BJ (cell line): ENCODE measurements at regions of chr19 and their contacts with region 1.

Region 1: DNA sequence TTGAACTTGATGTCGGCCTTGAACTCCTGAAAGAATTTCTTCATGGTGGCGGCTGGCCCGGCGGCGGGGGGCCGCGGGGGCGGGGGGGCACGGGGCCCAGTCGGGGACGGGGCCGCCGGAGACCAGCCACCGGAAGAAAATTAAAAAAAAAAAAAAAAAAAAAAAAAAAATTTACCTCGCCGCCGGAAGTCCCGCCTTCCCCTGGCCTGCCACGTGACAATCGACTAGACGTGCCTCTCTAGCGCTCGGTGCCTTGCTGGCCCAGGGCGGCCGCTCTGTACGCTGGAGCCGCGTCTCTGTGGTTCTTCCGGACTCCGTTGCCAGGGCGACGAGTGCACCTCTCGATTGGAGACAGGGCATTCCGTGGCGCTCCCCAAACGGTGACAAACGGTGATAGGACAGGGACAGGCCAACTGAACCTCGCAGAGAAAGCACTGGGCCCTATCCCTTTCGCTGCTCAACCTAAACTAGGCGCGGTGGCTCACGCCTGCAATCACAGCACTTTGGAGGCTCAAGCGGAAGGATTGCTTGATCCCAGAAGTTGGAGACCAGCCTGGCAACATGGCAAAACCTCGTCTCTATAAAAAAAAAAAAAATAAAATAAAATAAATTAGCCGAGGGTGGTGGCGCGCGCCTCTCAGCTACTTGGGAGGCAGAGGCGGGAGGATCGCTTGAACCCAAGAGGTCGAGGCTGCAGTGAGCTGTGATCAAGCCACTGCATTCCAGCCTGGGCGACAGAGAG is at the start of gene UBXN6:
- DNase-seq: peak; percentile 72
- H3K4me3 ChIP-seq: peak within 1 kb of the TSS; percentile 74
- H3K27me3 ChIP-seq: no peaks in the 10 kb centered on the region
- CTCF ChIP-seq: no peak
- polyA plus RNA-seq, gene UBXN6: 85.5 and 127 TPM in 2 replicates

Region 2: DNA sequence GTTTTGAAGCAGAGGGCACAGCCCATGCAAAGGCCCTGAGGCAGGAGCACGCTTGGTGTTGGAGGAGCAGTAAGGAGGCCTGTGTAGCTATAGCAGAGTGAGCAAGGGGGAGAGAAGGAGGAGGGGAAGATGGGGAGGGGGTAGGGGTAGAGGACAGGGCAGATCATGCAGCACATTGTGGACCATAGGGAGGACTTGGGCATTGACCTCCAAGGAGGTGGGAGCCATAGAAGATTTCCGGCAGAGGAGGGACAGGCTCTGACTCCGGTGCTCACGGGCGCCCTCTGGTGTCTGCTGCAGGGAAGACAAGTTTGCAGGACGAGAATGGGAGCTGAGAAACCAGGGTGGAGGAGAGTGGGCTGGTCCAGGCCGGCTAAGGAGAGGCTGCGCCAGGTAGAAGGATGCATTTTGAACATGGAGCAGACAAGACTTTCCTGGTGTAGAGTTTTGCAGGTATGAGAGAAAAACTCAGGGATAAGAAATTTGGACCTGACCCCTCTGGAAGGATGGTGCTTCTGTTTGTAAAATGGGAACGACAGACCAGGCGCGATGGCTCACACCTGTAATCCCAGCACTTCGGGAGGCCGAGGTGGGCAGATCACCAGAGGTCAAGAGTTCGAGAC is 318.1 kb before region 1 on chr19:
- CTCF ChIA-PET with region 1: no interaction called
- POLR2A ChIA-PET with region 1: no interaction called
- DNase-seq: no peak
- H3K4me3 ChIP-seq: no peak overlapping the region
- H3K27me3 ChIP-seq: no peaks in the 10 kb centered on the region
- CTCF ChIP-seq: peak; percentile 85

Region 3: DNA sequence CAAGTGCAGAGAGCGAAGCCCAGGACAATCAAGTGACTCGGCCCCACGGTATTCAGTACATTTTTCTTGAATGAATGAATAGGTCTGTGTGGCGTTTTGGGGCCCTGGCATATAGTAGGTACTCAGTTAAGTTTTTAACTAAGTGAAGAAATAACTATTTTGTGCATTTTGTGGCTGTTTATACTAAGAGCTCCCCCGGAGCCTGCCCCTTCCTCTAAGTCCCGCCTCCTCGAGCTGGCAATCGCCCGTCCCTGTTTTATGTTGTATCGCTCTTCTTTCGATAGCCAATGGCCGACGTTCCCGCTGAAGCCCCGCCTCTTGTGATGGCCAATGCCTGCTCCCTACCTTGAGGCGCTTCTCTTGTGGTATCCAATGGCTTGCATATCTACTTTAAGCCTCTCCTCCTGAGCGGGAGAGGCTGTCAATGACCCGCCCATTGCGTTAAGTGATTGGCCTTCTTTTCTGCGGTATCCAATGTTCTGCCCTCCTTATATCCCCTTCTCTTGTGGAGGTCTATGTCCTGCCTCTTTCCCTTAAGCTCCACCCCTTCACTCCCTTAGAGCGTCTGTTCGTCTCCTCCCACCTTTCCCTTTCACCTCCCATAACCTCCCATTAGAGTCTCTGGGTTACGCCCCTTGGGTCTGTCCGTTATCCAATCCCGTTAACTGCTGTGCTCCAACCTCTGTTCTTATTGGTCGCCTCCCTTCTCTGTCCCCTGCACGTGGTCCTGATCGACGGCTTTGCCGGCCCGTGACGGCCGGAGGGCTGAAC is 13.8 kb after region 1 on chr19:
- CTCF ChIA-PET with region 1: interaction called, 4 read pairs
- POLR2A ChIA-PET with region 1: interaction called, 24 read pairs
- DNase-seq: peak; percentile 100
- H3K4me3 ChIP-seq: peak overlapping the region; percentile 47
- H3K27me3 ChIP-seq: no peaks in the 10 kb centered on the region
- CTCF ChIP-seq: no peak

Region 4: GRCh38 chr19:4713384-4713951 is 255.6 kb after region 1 on chr19:
- CTCF ChIA-PET with region 1: no interaction called
- POLR2A ChIA-PET with region 1: no interaction called
- DNase-seq: peak; percentile 77
- H3K4me3 ChIP-seq: no peak overlapping the region
- H3K27me3 ChIP-seq: no peaks in the 10 kb centered on the region
- CTCF ChIP-seq: no peak